Activated CD4-positive, alpha-beta T cell treated with anti-CD3 and anti-CD28 coated beads for 36 hours (primary cell): ENCODE measurements at regions of chr19 and their contacts with region 1.

Region 1: GRCh38 chr19:13839130-13839937 is 37.6 kb upstream of the NANOS3 start:
- DNase-seq: peak; percentile 96
- ATAC-seq: peak; percentile 68
- H3K4me3 Mint-ChIP-seq: peak overlapping the region; percentile 94
- H3K27ac Mint-ChIP-seq: peak overlapping the region; percentile 95
- H3K4me1 Mint-ChIP-seq: peaks cover 54% of the 10 kb centered on the region
- H3K27me3 Mint-ChIP-seq: no peaks in the 10 kb centered on the region

Region 2: GRCh38 chr19:13476071-13476470 is 363.3 kb before region 1 on chr19:
- CTCF ChIA-PET with region 1: no interaction called
- POLR2A ChIA-PET with region 1: no interaction called
- intact Hi-C with region 1: no loop called
- DNase-seq: no peak
- ATAC-seq: no peak
- H3K4me3 Mint-ChIP-seq: no peak overlapping the region
- H3K27ac Mint-ChIP-seq: no peak overlapping the region
- H3K4me1 Mint-ChIP-seq: no peaks in the 10 kb centered on the region
- H3K27me3 Mint-ChIP-seq: peaks cover 23% of the 10 kb centered on the region

Region 3: DNA sequence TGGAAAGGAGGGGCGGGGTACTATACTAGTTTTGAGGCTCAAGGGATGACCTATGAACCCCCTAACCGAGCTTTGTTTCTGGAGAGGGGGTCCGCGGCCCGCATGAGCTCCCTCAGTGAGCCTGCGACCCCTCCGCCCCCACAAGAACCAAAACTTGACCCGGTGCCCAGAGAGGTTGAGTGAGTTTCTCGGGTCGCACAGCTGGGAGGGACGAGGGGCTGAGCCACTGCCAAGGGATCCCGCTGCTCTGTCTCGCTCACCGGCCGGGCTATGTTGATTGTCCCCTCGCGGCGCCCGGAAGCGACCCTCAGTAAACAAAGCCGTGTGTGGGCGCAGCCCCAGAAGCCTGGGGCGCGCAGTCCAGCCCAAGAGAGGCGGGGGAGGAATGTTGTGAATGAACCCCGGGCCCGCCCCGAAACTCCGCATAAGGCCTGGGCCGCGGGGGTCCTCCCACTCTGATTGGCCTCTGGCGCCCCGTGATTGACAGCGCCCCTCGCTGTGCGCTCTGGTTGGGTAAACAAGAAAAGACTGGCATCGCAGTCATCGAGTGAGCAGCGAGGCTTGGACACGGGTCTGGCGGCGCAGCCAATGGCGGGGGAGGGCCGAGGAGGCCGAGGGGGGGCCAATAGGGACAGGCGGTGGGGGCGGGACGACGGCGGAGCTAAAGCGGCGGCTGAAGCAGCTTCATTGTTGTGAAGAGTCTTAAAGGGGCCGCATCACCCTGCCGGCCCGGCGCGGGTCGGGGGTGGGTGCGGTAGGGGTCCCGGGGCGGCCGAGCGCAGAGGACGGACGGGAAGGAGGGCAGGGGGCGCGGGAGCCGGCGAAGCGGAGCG is 44.4 kb before region 1 on chr19 and contains the start of gene ZSWIM4:
- CTCF ChIA-PET with region 1: interaction called, 5 read pairs
- POLR2A ChIA-PET with region 1: no interaction called
- intact Hi-C with region 1: loop called (anchors 1 to 5 kb)
- DNase-seq: peak; percentile 98
- ATAC-seq: peak; percentile 99
- H3K4me3 Mint-ChIP-seq: peak within 1 kb of the TSS; percentile 96
- H3K27ac Mint-ChIP-seq: peak within 1 kb of the TSS; percentile 94
- H3K4me1 Mint-ChIP-seq: peaks cover 24% of the 10 kb centered on the region
- H3K27me3 Mint-ChIP-seq: no peaks in the 10 kb centered on the region
- total RNA-seq, gene ZSWIM4: 5.6 to 5.8 TPM

Region 4: DNA sequence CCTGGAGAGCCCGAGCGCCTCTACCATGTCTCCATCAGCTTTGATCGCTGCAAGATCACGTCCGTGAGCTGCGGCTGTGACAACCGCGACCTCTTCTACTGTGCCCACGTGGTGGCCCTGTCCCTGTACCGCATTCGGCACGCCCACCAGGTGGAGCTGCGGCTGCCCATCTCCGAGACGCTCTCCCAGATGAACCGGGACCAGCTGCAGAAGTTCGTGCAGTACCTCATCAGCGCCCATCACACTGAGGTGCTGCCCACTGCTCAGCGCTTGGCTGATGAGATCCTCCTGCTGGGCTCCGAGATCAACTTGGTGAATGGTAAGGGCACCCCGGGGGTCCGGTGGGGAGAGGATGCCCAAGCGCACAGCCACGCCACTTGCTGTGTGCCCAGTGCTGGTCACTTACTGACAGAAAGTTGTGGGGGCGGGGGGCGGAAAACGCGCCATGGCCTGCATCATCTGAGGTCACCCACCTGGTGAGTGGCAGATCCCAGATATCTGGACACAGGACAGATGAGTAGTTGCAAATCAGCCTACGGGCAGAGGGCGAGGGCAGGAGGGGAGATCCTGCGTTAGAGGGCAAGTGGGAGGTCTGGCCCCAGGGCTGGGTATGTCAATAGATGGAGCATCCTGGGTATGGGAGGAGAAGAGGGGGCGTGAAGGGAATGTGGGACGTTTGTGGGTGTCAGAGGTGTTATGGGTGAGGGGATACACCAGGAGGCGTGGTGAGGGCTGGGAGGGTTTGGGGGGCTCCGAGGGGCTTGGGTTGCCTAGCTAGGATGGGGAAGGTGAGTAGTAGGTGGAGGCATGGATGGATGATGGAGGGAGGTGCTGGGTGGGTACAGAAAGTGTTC is 34.3 kb before region 1 on chr19:
- CTCF ChIA-PET with region 1: no interaction called
- POLR2A ChIA-PET with region 1: no interaction called
- intact Hi-C with region 1: no loop called
- DNase-seq: peak; percentile 49
- ATAC-seq: no peak
- H3K4me3 Mint-ChIP-seq: no peak overlapping the region
- H3K27ac Mint-ChIP-seq: no peak overlapping the region
- H3K4me1 Mint-ChIP-seq: no peaks in the 10 kb centered on the region
- H3K27me3 Mint-ChIP-seq: no peaks in the 10 kb centered on the region

Region 5: DNA sequence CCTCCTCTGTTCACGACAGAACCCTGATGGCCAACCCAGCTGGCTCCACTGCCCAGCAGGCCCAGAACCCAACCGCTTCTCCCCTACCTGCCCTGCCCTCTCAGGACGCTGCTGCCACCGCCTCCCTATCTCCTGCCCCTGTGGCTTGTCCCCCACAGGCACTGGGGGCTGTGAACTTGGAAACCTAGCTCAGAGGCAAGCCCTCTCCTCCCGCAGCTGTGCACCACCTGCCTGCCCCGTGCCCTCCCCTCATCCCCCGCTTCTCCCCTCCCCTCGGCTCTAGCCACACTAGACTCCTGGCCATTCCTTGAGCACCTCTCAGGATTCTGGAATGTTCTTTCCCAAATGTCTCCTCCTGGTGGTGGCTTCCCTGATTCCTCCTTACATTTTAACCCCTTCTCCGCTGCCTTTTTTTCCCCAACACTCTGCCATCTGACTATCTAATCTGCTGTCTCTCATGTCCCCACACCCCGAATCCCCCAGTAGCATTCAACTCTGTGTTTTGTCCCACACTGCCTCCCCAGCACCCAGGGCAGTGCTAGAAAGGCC is 44.3 kb after region 1 on chr19:
- CTCF ChIA-PET with region 1: no interaction called
- POLR2A ChIA-PET with region 1: no interaction called
- intact Hi-C with region 1: no loop called
- DNase-seq: no peak
- ATAC-seq: no peak
- H3K4me3 Mint-ChIP-seq: no peak overlapping the region
- H3K27ac Mint-ChIP-seq: no peak overlapping the region
- H3K4me1 Mint-ChIP-seq: peaks cover 35% of the 10 kb centered on the region
- H3K27me3 Mint-ChIP-seq: no peaks in the 10 kb centered on the region

Region 6: DNA sequence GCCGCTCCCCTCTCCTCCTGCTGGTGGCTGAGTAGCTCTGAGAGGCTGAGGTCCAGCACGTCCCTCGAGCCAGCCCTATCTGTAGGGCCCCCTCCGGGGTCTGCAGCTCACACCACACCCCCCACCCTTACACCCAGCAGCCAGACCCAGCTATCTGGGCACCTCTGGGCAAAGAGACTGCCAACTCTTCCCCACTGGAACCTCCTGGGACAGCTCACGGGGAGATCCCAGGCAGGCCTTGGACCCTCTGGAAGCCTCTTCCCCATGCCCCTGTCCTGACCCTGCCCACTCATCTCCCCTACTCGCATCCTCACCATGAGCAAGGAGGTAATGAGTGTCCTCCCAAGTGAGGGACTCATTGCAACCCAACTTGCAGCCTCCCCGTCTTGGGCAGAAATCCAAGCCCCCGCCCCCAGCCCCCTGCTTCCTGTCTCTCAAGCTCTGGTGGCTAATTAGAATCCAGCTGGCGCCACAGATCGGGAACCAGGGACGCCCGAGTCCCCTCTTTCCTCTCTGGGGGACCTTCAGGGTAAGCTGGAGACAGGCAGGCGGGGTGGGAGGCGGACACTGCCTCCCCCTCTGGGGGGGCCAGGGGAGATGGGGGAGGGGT is 344.5 kb after region 1 on chr19:
- CTCF ChIA-PET with region 1: no interaction called
- POLR2A ChIA-PET with region 1: no interaction called
- intact Hi-C with region 1: no loop called
- DNase-seq: no peak
- ATAC-seq: peak; percentile 33
- H3K4me3 Mint-ChIP-seq: no peak overlapping the region
- H3K27ac Mint-ChIP-seq: no peak overlapping the region
- H3K4me1 Mint-ChIP-seq: no peaks in the 10 kb centered on the region
- H3K27me3 Mint-ChIP-seq: no peaks in the 10 kb centered on the region